GM23248 (cell line): ENCODE measurements at regions of chr1 and their contacts with region 1.

Region 1: DNA sequence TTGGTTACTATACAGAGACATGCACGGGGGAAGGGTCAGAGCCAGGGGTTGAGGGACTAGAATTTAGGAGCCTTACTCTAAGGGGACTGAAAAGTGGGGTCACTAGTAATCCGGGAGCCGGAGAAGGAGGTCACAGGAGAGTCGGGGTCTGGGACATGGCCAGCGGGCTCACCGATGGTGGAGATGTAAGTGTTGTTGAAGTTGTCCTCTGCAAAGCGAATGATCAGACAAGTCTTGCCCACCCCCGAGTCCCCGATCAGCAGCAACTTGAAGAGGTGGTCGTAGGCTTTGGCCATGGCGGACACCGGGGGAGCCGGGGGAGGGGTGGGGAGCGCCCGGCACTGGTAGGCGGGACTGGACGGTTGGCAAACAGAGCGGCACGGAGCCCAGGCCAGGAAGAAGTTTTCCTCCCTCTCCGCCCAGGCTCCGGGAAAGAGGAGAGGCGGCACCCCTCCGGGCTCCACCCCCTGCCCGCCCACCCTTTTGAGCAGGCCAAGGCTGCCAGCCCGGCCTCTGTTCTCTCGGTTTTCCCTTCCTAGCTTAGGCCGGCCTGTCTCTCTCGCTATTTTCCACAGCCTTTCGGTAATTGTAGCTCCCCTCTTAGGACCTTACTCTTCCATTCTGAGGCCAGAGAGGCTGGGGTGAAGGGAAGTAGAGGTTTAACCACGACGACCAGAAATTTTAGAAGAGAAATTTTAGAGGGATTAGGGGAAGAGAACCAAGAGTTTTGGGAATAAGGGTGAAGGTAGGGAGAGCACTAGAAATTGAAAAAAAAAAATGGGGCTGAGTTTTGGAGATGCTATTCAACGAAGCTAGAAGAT is at the start of gene RAB13:
- DNase-seq: peak; percentile 95
- H3K4me3 ChIP-seq: peak within 1 kb of the TSS; percentile 97
- H3K27ac ChIP-seq: peak within 1 kb of the TSS; percentile 84
- H3K4me1 ChIP-seq: peaks cover 15% of the 10 kb centered on the region; the same call in 1 of the 2 replicates
- H3K27me3 ChIP-seq: no peaks in the 10 kb centered on the region
- total RNA-seq, gene RAB13: 29.5 and 33.1 TPM in 2 replicates

Region 2: DNA sequence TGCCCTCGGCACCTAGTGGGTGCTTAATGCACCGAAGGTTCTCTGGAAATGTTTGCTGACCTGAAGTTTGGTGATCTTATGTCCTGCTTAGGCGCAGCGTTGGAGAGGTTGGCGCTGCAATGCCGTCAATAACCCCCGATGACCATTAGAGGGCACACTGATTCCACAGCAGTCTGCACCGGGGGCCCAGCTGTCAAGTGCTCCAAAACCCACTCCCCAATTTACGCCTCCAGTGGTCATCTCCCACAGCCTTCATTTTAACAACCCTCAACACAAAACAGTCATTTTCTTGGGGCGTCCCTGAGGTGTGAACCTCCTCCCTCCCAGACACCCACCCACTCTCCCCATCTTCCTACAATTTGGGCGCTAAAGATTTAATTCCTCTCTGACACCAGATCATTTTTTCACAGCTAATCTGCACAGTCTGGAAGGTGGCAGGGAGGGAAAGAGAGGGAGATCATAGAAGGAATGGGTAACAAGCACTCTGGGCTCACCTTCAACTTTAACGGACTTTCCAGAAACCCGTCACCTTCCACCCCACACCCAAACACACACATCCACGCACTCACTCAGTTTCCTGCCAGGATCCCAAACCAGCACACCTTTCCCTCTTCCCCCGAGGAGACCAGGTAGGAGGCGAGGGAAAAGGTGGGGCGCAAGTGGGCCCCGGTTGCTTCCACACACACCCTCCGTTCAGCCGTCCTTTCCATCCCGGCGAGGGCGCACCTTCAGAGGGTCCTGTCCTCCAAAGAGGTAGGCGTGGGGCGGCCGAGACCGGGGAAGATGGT is 308.2 kb before region 1 on chr1:
- in situ Hi-C with region 1: loop called (anchors 5 kb)
- DNase-seq: peak; percentile 69
- H3K4me3 ChIP-seq: peak overlapping the region; percentile 57
- H3K27ac ChIP-seq: no peak overlapping the region
- H3K4me1 ChIP-seq: no peaks in the 10 kb centered on the region
- H3K27me3 ChIP-seq: peaks cover 7% of the 10 kb centered on the region; the same call in 1 of the 2 replicates

Region 3: GRCh38 chr1:153816283-153816889 is 169.8 kb before region 1 on chr1:
- in situ Hi-C with region 1: loop called (anchors 10 kb)
- DNase-seq: no peak
- H3K4me3 ChIP-seq: no peak overlapping the region
- H3K27ac ChIP-seq: no peak overlapping the region
- H3K4me1 ChIP-seq: no peaks in the 10 kb centered on the region
- H3K27me3 ChIP-seq: no peaks in the 10 kb centered on the region